Posterior vena cava (tissue), 2 donors: ENCODE measurements at regions of chr6 and their contacts with region 1.

Region 1: GRCh38 chr6:166775180-166776081 is 148.4 kb upstream of the RPS6KA2 start:
- DNase-seq: peak; percentile 80

Region 2: DNA sequence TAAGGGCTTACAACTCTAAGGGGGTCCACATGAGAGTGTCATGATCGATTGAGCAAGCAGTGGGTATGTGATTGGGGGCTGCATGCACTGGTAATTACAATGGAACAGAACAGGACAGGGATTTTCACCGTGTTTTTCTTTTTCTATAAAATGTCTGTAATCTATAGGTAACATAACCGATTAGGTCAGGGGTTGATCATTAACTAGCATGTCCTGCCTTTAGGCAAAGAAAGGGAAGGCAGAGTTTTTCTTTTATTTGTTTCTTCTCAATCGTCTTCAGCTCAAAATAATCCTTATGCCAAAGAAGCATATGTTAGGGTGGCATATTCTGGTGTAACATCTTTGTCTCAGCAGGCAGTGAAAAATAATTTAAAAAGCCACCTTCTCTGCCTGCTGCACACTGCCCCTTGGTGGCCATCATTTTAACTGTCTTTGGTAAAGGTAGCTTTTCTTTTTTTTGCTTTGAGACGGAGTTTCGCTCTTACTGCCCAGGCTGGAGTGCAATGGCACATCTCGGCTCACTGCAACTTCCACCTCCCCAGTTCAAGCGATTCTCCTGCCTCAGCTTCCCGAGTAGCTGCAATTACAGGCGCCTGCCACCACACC is 214.1 kb after region 1 on chr6:
- intact Hi-C with region 1: loop called (anchors 10 kb)
- DNase-seq: no peak

Region 3: GRCh38 chr6:167005350-167006159 is 230.1 kb after region 1 on chr6:
- intact Hi-C with region 1: no loop called
- DNase-seq: no peak